IMR-90 (cell line): ENCODE measurements at regions of chr1 and their contacts with region 1.

Region 1: DNA sequence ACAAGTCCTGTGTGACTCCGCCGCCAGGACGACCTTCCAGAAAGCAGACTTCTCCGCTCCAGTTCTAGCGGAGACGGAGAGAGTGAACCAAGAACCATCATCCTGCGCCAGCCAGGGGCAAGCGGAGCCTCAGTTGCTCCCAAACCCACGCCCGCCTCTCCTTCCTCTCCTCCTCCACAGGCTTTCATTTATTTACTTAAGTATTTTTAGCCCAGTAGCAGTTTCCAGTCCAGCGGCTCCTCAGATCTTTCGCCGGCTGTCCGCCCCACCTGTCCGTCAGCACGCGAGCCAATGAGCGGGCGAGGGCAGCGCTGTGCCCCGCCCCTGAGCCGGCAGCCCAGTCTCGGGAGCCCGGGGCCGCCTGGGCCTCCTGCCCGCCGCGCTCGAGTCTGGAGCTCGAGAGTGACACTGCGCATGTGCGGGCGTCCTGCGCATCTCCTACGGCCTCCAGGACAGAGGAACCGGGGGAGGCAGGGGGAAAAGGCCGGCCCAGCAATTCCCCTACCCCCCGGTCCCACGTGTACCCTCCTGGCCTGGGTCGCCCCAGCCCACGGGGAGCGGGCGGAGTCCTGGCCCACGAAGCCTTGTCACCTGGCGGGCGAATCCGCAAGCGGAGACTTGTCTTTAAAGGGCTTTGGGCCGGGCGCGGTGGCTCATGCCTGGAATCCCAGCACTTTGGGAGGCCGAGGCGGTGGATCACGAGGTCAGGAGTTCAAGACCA is at the start of gene FALEC:
- DNase-seq: peak; percentile 93
- ATAC-seq: peak; percentile 99
- H3K4me3 ChIP-seq: peak within 1 kb of the TSS; percentile 48
- H3K27ac ChIP-seq: peak within 1 kb of the TSS; percentile 72
- H3K4me1 ChIP-seq: peaks cover 6% of the 10 kb centered on the region
- H3K27me3 ChIP-seq: no peaks in the 10 kb centered on the region
- CTCF ChIP-seq: no peak
- POLR2A ChIP-seq: 0 out of 2 replicates have a peak, but pooled peaks have one; percentile 7
- RAD21 ChIP-seq: no peak
- total RNA-seq, gene FALEC: not detected in 2 replicates

Region 2: GRCh38 chr1:150321826-150322166 is 193.7 kb before region 1 on chr1:
- CTCF ChIA-PET with region 1: no interaction called
- POLR2A ChIA-PET with region 1: no interaction called
- dilution Hi-C with region 1: no loop called
- in situ Hi-C with region 1: no loop called
- intact Hi-C with region 1: loop called (anchors 5 kb)
- DNase-seq: no peak
- ATAC-seq: no peak; the same call in 1 of the 2 replicates
- H3K4me3 ChIP-seq: peak overlapping the region; percentile 98
- H3K27ac ChIP-seq: peak overlapping the region; percentile 95
- H3K4me1 ChIP-seq: no peaks in the 10 kb centered on the region
- H3K27me3 ChIP-seq: no peaks in the 10 kb centered on the region
- CTCF ChIP-seq: no peak
- POLR2A ChIP-seq: no peak
- RAD21 ChIP-seq: no peak

Region 3: GRCh38 chr1:150456146-150456647 is 59.3 kb before region 1 on chr1:
- CTCF ChIA-PET with region 1: no interaction called
- POLR2A ChIA-PET with region 1: no interaction called
- dilution Hi-C with region 1: no loop called
- in situ Hi-C with region 1: no loop called
- intact Hi-C with region 1: no loop called
- DNase-seq: no peak
- ATAC-seq: no peak
- H3K4me3 ChIP-seq: no peak overlapping the region
- H3K27ac ChIP-seq: no peak overlapping the region
- H3K4me1 ChIP-seq: no peaks in the 10 kb centered on the region
- H3K27me3 ChIP-seq: no peaks in the 10 kb centered on the region
- CTCF ChIP-seq: no peak
- POLR2A ChIP-seq: no peak
- RAD21 ChIP-seq: no peak

Region 4: GRCh38 chr1:150532868-150533302 is 17.4 kb after region 1 on chr1:
- CTCF ChIA-PET with region 1: interaction called, 13 read pairs
- POLR2A ChIA-PET with region 1: no interaction called
- dilution Hi-C with region 1: no loop called
- in situ Hi-C with region 1: no loop called
- intact Hi-C with region 1: no loop called
- DNase-seq: no peak
- ATAC-seq: no peak
- H3K4me3 ChIP-seq: no peak overlapping the region
- H3K27ac ChIP-seq: no peak overlapping the region
- H3K4me1 ChIP-seq: peaks cover 27% of the 10 kb centered on the region
- H3K27me3 ChIP-seq: no peaks in the 10 kb centered on the region
- CTCF ChIP-seq: no peak
- POLR2A ChIP-seq: no peak
- RAD21 ChIP-seq: no peak

Region 5: DNA sequence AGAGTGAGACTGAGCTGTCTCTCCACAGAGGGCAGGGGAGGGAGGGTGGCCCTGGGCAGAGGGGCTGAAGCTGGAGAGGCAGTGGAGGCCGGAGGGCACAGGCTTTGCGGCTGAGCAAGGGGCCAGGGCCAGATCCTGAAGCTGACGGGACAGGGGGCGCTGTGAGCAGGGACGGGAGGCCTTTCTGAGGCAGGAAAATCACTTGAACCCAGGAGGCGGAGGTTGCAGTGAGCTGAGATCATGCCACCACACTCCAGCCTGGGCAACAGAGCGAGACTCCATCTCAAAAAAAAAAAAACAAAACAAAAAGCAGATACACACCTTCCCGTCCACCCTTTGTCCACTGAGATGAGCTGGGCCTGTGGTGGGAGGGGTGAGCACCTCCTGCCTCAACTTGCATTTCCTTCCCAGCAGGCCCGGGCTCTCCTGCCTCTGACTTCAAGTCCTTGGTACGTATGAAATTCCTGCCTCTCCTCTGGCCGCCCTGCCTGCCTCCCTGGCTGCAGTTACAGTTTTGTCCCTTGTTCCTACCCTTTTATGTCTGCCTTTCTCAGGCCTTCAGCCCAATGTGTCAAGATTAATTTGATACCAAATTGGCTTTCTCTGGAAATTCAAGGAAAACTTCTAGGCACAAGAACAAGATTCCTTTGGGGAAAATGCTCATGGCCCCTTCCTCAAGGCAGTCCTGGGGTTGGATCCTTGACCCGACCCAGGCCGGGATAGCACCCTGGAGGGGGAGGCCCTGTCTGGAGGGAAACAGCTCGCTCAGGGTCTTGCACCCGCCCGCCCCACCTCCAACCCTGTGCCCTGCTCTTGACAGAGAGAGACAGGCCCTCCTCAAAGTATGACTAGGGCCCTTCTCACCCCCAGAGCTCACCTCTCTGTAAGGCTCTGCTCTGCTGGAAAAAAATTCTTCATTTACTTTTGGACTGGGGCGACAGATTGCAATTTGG is 22.5 kb after region 1 on chr1:
- CTCF ChIA-PET with region 1: interaction called, 13 read pairs
- POLR2A ChIA-PET with region 1: no interaction called
- dilution Hi-C with region 1: no loop called
- in situ Hi-C with region 1: no loop called
- intact Hi-C with region 1: no loop called
- DNase-seq: peak; percentile 87
- ATAC-seq: peak; percentile 93
- H3K4me3 ChIP-seq: no peak overlapping the region
- H3K27ac ChIP-seq: peak overlapping the region; percentile 83
- H3K4me1 ChIP-seq: peaks cover 27% of the 10 kb centered on the region
- H3K27me3 ChIP-seq: no peaks in the 10 kb centered on the region
- CTCF ChIP-seq: no peak
- POLR2A ChIP-seq: no peak
- RAD21 ChIP-seq: no peak

Region 6: GRCh38 chr1:150548632-150549495 is 33.4 kb after region 1 on chr1 and contains the start of gene ADAMTSL4:
- CTCF ChIA-PET with region 1: no interaction called
- POLR2A ChIA-PET with region 1: no interaction called
- dilution Hi-C with region 1: no loop called
- in situ Hi-C with region 1: no loop called
- intact Hi-C with region 1: no loop called
- DNase-seq: peak; percentile 78
- ATAC-seq: peak; percentile 72
- H3K4me3 ChIP-seq: peak within 1 kb of the TSS; percentile 50
- H3K27ac ChIP-seq: peak within 1 kb of the TSS; percentile 59
- H3K4me1 ChIP-seq: peaks cover 26% of the 10 kb centered on the region
- H3K27me3 ChIP-seq: no peaks in the 10 kb centered on the region
- CTCF ChIP-seq: peak; percentile 20; the same call in 1 of the 2 replicates
- POLR2A ChIP-seq: peak; percentile 12; the same call in 1 of the 2 replicates
- RAD21 ChIP-seq: no peak
- total RNA-seq, gene ADAMTSL4: 0.54 and 0.56 TPM in 2 replicates

Region 7: DNA sequence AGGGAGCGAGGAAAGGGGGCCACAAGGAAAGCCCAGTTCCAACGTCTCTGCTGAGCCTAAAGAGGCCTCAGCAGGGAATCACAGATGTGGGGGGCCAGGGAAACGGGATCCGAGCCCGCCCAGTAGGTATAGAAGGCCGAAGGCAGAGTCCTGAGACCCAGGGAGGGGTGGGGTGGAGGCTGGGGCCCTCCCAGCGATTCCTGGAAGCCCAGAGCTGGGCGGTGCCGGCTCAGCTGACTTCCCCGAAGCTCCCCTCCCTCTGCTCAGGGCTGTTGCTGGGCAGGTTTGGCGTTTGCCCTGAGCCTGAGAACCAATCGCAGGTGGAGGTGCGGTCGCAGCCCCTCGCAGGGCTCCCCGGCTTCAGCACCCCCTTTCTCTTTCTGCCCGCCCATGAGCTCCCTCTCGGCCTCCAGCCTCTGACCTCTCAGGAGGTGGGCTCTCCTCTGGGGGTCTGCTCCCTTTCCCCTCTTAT is 46.5 kb after region 1 on chr1:
- CTCF ChIA-PET with region 1: no interaction called
- POLR2A ChIA-PET with region 1: no interaction called
- dilution Hi-C with region 1: no loop called
- in situ Hi-C with region 1: no loop called
- intact Hi-C with region 1: no loop called
- DNase-seq: peak; percentile 91
- ATAC-seq: peak; percentile 58
- H3K4me3 ChIP-seq: peak overlapping the region; percentile 24
- H3K27ac ChIP-seq: peak overlapping the region; percentile 96
- H3K4me1 ChIP-seq: peaks cover 31% of the 10 kb centered on the region
- H3K27me3 ChIP-seq: no peaks in the 10 kb centered on the region
- CTCF ChIP-seq: no peak
- POLR2A ChIP-seq: peak; percentile 46
- RAD21 ChIP-seq: no peak